K562 (cell line): ENCODE measurements at regions of chr13 and their contacts with region 1.

Region 1: GRCh38 chr13:30978981-30979956 is 46.8 kb downstream of the TEX26 start:
- DNase-seq: peak; percentile 11 to 52 (median 22)
- ATAC-seq: peak; percentile 82
- H3K4me3 ChIP-seq: no peak overlapping the region
- H3K27ac ChIP-seq: no peak overlapping the region
- H3K4me1 ChIP-seq: no peaks in the 10 kb centered on the region; a peak in 1 of 5 replicates
- H3K27me3 ChIP-seq: peaks cover 0 to 2% of the 10 kb centered on the region in 2 experiments; a peak in 2 of 5 replicates
- CTCF ChIP-seq: peak; percentile 53 to 75 (median 58)
- EP300 ChIP-seq: no peak
- POLR2A ChIP-seq: no peak
- RAD21 ChIP-seq: peak; percentile 10 to 38; a peak in 2 of 4 replicates

Region 2: GRCh38 chr13:30690282-30691188 is 288.7 kb before region 1 on chr13:
- CTCF ChIA-PET with region 1: no interaction called
- POLR2A ChIA-PET with region 1: no interaction called
- in situ Hi-C with region 1: no loop called
- intact Hi-C with region 1: no loop called
- DNase-seq: peak in 1 of 4 experiments; percentile 31
- ATAC-seq: peak; percentile 89
- H3K4me3 ChIP-seq: peak overlapping the region; percentile 32
- H3K27ac ChIP-seq: no peak overlapping the region
- H3K4me1 ChIP-seq: peaks cover 0 to 4% of the 10 kb centered on the region in 2 experiments; a peak in 3 of 5 replicates
- H3K27me3 ChIP-seq: peaks cover 0 to 12% of the 10 kb centered on the region in 2 experiments; a peak in 2 of 5 replicates
- CTCF ChIP-seq: no peak
- EP300 ChIP-seq: no peak
- POLR2A ChIP-seq: no peak
- RAD21 ChIP-seq: no peak

Region 3: GRCh38 chr13:30880856-30881155 is 98.5 kb before region 1 on chr13:
- CTCF ChIA-PET with region 1: no interaction called
- POLR2A ChIA-PET with region 1: no interaction called
- in situ Hi-C with region 1: no loop called
- intact Hi-C with region 1: no loop called
- DNase-seq: no peak
- ATAC-seq: no peak
- H3K4me3 ChIP-seq: no peak overlapping the region
- H3K27ac ChIP-seq: no peak overlapping the region
- H3K4me1 ChIP-seq: no peaks in the 10 kb centered on the region
- H3K27me3 ChIP-seq: no peaks in the 10 kb centered on the region; a peak in 1 of 5 replicates
- CTCF ChIP-seq: no peak
- EP300 ChIP-seq: no peak
- POLR2A ChIP-seq: no peak
- RAD21 ChIP-seq: no peak

Region 4: DNA sequence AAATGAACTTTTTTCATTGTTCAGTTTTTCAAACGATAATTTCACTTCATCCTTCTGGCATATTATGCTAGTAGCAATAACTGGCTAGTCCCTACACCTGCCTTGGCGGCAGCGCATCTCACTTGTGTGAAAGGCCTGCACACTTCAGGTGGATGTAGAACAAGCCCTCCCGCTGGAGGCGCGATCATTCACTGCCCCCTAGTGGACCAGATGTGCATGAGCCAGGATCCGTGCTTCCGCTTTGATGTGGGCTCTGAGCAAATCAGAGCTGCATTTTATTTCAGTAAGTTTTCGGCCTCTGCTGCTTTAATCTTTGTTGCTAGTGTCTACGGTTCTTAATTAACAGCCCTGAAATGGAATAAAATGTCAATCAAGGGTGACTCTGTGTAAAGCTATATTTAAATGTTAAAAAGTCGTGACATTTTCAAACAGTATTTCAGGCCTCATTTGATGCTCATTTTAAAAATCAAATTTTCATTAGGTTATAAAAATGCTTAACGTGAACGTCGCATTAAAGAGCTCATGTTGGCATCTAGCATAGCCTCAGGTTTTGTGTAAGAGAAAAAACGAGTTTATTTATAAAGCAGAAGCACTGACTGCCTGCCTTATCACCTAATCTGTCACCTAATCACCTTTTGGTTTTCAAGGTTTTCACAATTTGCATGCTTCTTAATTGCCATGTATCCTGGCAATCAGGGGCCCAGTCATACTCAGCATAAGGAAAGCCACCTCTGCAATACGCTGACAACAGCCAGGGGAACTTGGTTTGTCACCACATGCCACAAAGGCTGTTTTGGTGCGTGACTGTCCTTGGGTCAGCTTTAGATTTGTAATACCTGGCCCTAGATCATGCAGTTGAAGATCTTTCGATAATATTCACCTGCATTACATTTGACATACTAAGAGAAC is 65.4 kb after region 1 on chr13:
- CTCF ChIA-PET with region 1: no interaction called
- POLR2A ChIA-PET with region 1: no interaction called
- in situ Hi-C with region 1: no loop called
- intact Hi-C with region 1: loop called (anchors 5 kb)
- DNase-seq: peak; percentile 67 to 77 (median 76)
- ATAC-seq: peak; percentile 97
- H3K4me3 ChIP-seq: no peak overlapping the region
- H3K27ac ChIP-seq: no peak overlapping the region
- H3K4me1 ChIP-seq: peaks cover 4 to 5% of the 10 kb centered on the region in 2 experiments; a peak in 3 of 5 replicates
- H3K27me3 ChIP-seq: peaks cover 0 to 15% of the 10 kb centered on the region in 2 experiments; a peak in 3 of 5 replicates
- CTCF ChIP-seq: peak; percentile 82 to 95 (median 84)
- EP300 ChIP-seq: no peak
- POLR2A ChIP-seq: no peak
- RAD21 ChIP-seq: peak; percentile 29 to 73; a peak in 3 of 4 replicates